ENCODE measurements at regions of chr4 and their contacts with region 1.

Region 1: GRCh38 chr4:25862411-25863346 is at the start of gene SEL1L3:
- DNase-seq: peak; percentile 53
- H3K4me3 Mint-ChIP-seq: peak within 1 kb of the TSS; percentile 93
- H3K27ac Mint-ChIP-seq: peak within 1 kb of the TSS; percentile 92
- H3K4me1 Mint-ChIP-seq: peaks cover 33% of the 10 kb centered on the region
- H3K27me3 Mint-ChIP-seq: no peaks in the 10 kb centered on the region
- total RNA-seq, gene SEL1L3: 32.3 to 38.2 TPM

Region 2: DNA sequence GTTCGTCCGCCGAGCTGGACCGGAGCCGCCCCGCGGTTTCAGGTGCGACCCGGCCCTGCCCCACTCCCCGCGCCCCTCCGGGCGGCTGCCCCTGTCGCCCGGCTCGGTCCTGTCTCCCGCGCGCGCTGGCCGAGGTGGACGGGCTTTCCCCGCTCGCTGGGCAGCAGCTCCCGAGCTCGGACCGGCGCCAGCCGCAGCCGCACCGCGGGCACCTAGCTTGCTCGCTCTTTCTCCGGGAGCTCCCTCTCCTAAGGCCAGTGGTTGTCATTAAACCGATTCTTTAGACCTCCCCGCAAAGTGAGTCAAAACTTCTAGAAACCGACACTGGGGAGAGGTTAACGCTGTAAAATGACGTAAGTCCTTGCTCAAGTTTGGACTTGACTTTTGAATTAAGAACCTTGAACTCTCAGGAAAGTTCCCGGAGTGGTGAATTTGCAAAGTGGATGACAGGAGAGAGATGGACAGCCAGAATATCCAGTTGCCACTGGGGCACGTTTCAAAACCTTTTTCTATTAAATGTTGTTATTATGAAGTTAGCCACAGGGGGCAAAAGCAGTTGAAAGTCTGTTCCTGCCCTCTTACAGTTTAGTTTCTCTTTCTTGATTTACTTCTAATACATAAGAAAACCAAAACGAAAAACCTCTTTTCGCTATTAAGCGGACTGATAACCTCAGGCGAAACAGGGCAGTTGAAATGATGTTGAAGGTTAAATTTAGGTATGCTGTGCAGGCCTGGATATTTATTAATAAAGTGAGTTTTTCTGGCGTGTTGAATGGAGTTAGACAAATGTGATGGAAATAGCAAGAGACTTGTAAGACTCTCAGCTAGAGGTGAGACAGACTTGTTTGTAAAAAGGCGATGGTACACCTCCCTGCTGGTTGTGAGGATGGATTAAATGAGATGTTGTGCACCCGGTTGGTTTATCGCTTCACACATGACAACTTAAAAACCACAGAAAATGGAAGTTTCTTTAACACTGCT is 628.0 kb before region 1 on chr4:
- CTCF ChIA-PET with region 1: no interaction called
- intact Hi-C with region 1: loop called (anchors 5 kb)
- DNase-seq: peak; percentile 63
- H3K4me3 Mint-ChIP-seq: peak overlapping the region; percentile 92
- H3K27ac Mint-ChIP-seq: peak overlapping the region; percentile 91
- H3K4me1 Mint-ChIP-seq: peaks cover 40% of the 10 kb centered on the region
- H3K27me3 Mint-ChIP-seq: no peaks in the 10 kb centered on the region

Region 3: GRCh38 chr4:25376754-25377571 is 485.7 kb before region 1 on chr4 and contains the start of gene ANAPC4:
- CTCF ChIA-PET with region 1: no interaction called
- intact Hi-C with region 1: loop called (anchors 5 kb)
- DNase-seq: peak; percentile 95
- H3K4me3 Mint-ChIP-seq: no peak within 1 kb of the TSS
- H3K27ac Mint-ChIP-seq: peak within 1 kb of the TSS; percentile 78
- H3K4me1 Mint-ChIP-seq: peaks cover 9% of the 10 kb centered on the region
- H3K27me3 Mint-ChIP-seq: no peaks in the 10 kb centered on the region
- total RNA-seq, gene ANAPC4: 23.1 to 27.3 TPM

Region 4: DNA sequence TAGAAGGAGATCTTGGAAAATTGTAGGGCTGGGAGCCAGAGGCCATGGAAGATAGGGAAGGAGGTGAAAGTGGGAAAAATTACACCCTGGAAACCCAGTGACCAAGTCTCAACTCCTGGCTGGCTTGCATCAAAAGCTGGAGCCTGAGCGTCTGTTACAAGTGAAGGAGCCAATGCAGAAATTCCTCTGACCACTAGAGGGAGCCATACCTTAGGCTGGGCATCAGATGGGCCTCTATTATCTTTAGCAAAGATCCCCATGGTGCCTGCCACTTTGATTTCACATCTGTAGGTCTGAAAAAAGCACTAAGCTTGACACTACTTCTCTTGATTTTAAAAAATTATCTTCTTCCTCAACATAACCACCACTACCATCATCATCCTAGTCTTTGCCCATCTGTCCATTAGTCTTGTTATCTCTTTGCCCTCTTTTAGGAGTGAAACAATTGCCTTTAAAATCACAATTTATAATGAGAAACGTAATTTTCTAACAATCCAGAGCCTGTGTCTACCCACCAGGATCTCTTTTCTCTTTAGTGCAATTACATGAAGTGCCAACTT is 422.7 kb before region 1 on chr4:
- CTCF ChIA-PET with region 1: no interaction called
- intact Hi-C with region 1: loop called (anchors 1 kb)
- DNase-seq: peak; percentile 77
- H3K4me3 Mint-ChIP-seq: no peak overlapping the region
- H3K27ac Mint-ChIP-seq: no peak overlapping the region
- H3K4me1 Mint-ChIP-seq: no peaks in the 10 kb centered on the region
- H3K27me3 Mint-ChIP-seq: no peaks in the 10 kb centered on the region

Region 5: DNA sequence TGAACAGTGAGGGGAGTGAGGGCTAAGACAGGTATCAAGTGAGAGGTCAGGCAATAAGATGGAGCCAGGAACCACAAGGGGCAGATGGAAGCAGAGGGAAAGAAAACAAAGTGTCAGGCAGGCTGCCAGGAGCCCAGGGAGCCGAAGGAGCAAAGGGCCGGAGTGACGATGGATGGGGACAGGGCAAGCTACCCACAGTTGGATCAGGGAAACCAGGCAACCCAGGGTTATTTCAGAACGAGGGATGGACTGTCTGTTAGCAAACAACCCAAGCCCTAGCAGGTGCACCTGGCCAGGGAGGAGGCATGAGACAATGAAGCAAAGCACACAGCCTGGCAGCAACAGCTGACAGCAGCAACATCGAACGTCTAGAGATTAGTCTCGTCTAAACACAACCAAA is 39.0 kb before region 1 on chr4:
- CTCF ChIA-PET with region 1: no interaction called
- intact Hi-C with region 1: no loop called
- DNase-seq: no peak
- H3K4me3 Mint-ChIP-seq: no peak overlapping the region
- H3K27ac Mint-ChIP-seq: no peak overlapping the region
- H3K4me1 Mint-ChIP-seq: peaks cover 3% of the 10 kb centered on the region
- H3K27me3 Mint-ChIP-seq: no peaks in the 10 kb centered on the region

Region 6: GRCh38 chr4:25842229-25842845 is 20.3 kb before region 1 on chr4:
- CTCF ChIA-PET with region 1: interaction called, 3 read pairs
- intact Hi-C with region 1: loop called (anchors 1 kb)
- DNase-seq: peak; percentile 65
- H3K4me3 Mint-ChIP-seq: no peak overlapping the region
- H3K27ac Mint-ChIP-seq: no peak overlapping the region
- H3K4me1 Mint-ChIP-seq: peaks cover 40% of the 10 kb centered on the region
- H3K27me3 Mint-ChIP-seq: no peaks in the 10 kb centered on the region

Region 7: DNA sequence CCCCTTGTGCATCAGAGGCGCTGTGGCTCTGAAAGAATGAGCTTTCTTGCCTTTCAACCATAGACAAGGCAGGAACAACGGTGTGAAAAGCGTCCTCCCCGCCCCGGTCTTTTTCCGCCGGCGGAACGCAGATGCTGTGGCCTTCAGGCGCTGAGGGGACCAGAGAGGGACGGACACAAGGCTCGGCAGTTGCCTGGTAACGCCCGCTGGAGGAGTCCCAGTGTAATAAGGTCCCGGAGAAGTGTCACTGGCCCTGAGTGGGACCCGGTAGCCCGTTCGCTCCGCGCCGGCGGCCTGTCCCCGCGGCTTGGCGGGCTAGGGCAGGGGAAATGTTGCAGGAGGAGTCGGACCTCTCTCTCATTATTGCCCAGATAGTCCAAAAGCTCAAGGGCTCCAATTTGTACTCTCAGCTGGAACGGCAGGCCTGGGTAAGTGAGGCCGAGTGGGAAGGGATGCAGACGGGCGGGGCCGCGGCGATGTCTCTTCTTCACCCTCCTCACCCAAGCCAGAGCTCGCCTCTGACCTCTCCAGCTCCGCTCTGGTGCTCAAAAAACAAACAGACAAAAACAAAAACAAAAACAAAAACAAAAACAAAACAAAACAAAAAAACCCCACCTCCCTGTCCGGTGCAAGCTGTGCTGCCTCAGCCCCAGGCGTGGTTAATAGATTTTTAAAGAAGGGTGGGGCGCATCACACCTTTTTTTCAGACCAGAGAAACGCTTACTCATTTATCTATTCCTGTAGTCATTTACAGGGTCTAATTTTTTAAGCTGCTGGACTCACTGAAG is 721.4 kb after region 1 on chr4 and contains the start of gene TBC1D19:
- CTCF ChIA-PET with region 1: no interaction called
- intact Hi-C with region 1: loop called (anchors 1 kb)
- DNase-seq: peak; percentile 92
- H3K4me3 Mint-ChIP-seq: peak within 1 kb of the TSS; percentile 93
- H3K27ac Mint-ChIP-seq: peak within 1 kb of the TSS; percentile 92
- H3K4me1 Mint-ChIP-seq: peaks cover 32% of the 10 kb centered on the region
- H3K27me3 Mint-ChIP-seq: no peaks in the 10 kb centered on the region
- total RNA-seq, gene TBC1D19: 3.8 to 4.1 TPM

Region 8: DNA sequence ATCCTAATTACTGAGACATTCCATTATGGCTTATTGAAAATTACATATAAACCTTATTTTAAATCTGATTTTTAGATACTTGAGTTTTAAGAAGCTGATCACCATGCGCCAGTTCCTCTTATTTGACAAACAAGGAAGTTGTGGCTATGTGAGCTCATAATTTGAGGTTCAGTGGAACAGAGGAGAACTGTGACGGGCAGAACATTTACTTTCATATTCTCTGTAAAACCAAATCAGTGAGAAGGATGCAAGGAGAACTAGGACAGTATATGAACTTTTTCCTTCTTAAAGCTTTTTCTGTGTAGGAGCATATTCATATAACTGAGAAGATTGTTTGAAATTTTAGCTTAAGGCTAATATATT is 1023.2 kb after region 1 on chr4:
- CTCF ChIA-PET with region 1: no interaction called
- intact Hi-C with region 1: loop called (anchors 5 kb)
- DNase-seq: peak; percentile 42
- H3K4me3 Mint-ChIP-seq: peak overlapping the region; percentile 58
- H3K27ac Mint-ChIP-seq: peak overlapping the region; percentile 88
- H3K4me1 Mint-ChIP-seq: peaks cover 67% of the 10 kb centered on the region
- H3K27me3 Mint-ChIP-seq: no peaks in the 10 kb centered on the region

Measured in activated naive CD4-positive, alpha-beta T cell treated with anti-CD3 and anti-CD28 coated beads for 36 hours (primary cell).